HAP-1 (cell line): ENCODE measurements at regions of chr14 and their contacts with region 1.

Region 1: DNA sequence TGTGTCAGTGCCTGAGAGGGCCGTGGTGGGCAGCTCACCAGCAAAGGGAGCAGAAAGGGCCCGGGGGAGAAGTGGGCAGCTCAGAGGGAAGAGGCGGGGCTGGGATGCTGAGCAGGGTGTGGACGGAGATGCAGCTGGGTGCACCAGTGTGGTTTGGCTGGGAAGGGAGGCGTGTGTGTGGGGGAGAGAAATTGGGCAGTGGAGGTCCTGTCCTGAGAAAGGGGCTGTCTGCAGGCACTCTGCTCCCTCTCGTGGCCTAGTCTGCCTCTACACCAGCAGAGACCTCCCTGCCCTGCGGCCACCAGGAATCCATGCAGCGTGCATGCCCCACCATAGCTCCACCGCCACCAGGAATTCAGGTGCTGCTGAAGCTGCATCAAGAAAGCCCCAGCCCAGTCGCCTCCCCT is 6.4 kb downstream of the TMEM121 start:
- DNase-seq: peak; percentile 54 to 79
- H3K4me3 ChIP-seq: no peak overlapping the region
- H3K4me1 ChIP-seq: peaks cover 1% of the 10 kb centered on the region; the same call in 1 of the 2 replicates
- H3K27me3 ChIP-seq: peaks cover 4% of the 10 kb centered on the region

Region 2: DNA sequence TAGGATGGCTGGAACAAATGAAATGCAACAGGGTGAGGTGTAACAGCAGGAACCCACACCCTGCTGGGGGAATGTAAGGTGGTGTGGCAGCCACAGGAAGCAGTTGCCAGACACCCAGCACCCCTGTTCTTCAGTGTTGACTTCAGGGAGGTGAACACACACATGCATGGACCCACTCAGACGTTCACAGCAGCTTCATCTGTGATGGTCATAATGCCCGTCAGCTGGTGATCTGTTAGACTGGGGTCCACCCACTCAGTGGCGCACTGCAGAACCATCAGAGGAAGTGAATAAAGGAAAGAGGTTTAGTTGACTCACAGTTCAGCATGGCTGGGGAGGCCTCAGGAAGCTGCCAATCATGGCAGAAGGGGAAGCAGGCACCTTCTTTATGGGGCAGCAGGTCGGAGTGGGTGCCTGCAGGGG is 157.1 kb before region 1 on chr14:
- in situ Hi-C with region 1: loop called (anchors 5 kb)
- DNase-seq: no peak
- H3K4me3 ChIP-seq: no peak overlapping the region
- H3K4me1 ChIP-seq: no peaks in the 10 kb centered on the region
- H3K27me3 ChIP-seq: no peaks in the 10 kb centered on the region

Region 3: DNA sequence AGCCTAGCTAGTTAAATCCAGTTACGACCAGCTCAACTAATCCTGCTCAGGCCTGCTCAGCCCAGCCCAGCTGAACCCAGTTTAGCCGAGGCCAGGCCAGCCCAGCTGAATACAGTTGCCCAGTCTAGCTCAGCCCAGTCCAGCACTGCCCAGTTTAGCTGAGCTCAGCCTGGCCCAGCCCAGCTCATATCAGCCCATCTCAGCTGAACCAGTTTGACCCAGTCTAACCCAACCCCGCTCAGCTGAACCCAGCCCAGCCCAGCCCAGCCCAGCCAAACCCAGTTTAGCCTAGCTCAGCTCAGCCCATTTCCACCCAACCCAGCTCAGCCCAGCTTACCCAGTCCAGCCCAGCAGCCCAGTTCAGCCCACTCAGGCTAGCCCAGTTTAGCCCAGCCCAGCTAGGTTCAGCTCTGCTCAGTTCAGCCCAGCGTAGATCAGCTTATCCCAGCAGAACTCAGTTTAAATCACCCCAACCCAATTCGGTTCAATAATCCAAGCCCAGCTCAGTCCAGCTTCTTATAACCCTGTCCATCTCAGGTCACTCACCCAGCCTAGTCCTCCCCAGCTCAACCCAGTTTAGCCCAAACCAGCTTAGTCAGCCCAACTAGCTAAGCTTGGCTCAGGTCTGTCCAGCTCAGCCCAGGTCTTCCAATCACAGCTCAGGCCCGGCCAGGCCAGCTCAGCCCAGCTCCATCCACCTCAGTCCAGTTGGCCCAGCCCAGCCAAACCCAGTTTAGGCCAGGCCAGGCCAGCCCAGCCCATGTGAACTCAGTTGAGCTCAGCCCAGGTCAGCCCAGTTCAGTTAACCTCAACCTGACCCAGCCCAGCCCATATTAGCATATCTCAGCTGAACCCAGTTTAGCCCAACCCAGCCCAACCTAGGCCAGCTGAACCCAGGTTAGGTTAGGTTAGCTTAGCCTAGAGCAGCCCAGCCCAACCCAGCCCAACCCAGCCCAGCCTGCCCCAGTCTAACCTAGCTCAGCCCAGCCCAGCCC is 70.4 kb after region 1 on chr14:
- in situ Hi-C with region 1: no loop called
- DNase-seq: no peak
- H3K4me3 ChIP-seq: no peak overlapping the region
- H3K4me1 ChIP-seq: no peaks in the 10 kb centered on the region
- H3K27me3 ChIP-seq: no peaks in the 10 kb centered on the region